HEK293 (cell line): ENCODE measurements at regions of chr16 and their contacts with region 1.

Region 1: GRCh38 chr16:30844671-30845449 is 49.0 kb downstream of the BCL7C start:
- H3K4me3 ChIP-seq: no peak overlapping the region
- H3K27ac ChIP-seq: no peak overlapping the region
- H3K4me1 ChIP-seq: no peaks in the 10 kb centered on the region
- CTCF ChIP-seq: peak; percentile 91

Region 2: GRCh38 chr16:30637942-30638341 is 206.9 kb before region 1 on chr16:
- CTCF ChIA-PET with region 1: no interaction called
- POLR2A ChIA-PET with region 1: no interaction called
- H3K4me3 ChIP-seq: no peak overlapping the region
- H3K27ac ChIP-seq: no peak overlapping the region
- H3K4me1 ChIP-seq: 0 out of 2 replicates have a peak, but pooled peaks cover 2% of the 10 kb centered on the region
- CTCF ChIP-seq: peak; percentile 75

Region 3: DNA sequence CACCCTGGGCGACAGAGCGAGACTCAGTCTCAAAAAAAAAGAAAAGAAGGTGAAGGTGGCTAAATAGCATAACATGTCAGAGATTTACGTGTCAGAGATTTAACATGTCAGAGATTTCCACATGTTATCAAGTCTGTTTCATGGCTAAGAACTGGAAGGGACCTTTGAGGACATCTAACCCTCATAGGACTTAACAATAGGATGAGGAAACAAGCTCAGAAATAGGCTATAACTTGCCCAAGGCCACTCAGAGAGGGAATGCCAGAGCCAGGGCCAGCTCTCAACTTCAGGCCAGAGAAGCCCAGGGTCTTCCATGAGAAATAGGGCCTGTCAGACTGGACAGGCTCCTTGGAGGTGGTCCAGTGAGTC is 31.1 kb before region 1 on chr16:
- CTCF ChIA-PET with region 1: interaction called, 11 read pairs
- POLR2A ChIA-PET with region 1: no interaction called
- H3K4me3 ChIP-seq: peak overlapping the region; percentile 29
- H3K27ac ChIP-seq: peak overlapping the region; percentile 32; the same call in 1 of the 2 replicates
- H3K4me1 ChIP-seq: 0 out of 2 replicates have a peak, but pooled peaks cover 2% of the 10 kb centered on the region
- CTCF ChIP-seq: no peak

Region 4: GRCh38 chr16:30867747-30868146 is 22.9 kb after region 1 on chr16:
- CTCF ChIA-PET with region 1: interaction called, 21 read pairs
- POLR2A ChIA-PET with region 1: interaction called, 3 read pairs
- H3K4me3 ChIP-seq: no peak overlapping the region
- H3K27ac ChIP-seq: no peak overlapping the region
- H3K4me1 ChIP-seq: no peaks in the 10 kb centered on the region
- CTCF ChIP-seq: no peak

Region 5: DNA sequence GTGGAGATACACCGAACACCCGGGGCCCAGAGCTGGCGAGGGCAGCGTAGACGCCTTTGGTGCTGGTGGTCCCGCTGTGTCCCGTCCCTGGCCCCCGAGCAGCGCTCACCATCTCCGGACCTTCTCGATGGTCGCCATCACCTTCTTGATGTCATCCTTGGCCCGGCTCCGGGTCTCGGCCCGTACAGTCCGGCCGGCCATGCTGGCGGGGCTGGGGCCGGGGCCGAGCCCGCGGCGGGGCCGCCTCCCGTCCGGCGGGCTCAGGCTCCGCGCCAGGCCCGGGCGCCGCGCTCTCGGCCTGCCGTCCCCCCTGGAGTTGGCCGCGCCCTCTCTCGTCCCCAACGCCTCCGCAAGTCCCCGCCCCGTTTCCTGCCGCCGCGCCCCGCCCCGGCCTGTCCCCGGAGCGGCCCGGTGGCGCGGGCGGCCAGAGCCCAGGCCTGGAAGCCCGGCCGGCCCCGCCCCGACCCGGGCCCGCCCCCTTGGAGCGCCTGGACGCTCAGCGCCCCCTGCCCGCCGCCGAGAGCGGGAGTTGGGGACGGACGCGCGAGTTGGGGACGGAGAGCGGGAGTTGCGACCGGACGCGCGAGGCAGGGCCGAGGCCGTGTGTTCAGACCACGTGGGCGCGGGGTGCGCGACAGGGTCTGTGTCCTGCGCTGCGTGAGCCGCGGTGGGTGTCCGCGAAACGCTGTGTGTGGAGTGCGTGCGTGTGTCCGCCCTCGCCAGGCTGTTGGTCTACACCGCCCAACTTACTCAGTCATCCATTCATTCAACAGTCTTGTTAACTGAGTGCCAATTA is 49.1 kb after region 1 on chr16 and contains the start of gene BCL7C:
- CTCF ChIA-PET with region 1: interaction called, 22 read pairs
- POLR2A ChIA-PET with region 1: no interaction called
- H3K4me3 ChIP-seq: peak within 1 kb of the TSS; percentile 84
- H3K27ac ChIP-seq: peak within 1 kb of the TSS; percentile 75
- H3K4me1 ChIP-seq: no peaks in the 10 kb centered on the region; the same call in 1 of the 2 replicates
- CTCF ChIP-seq: peak; percentile 93

Region 6: DNA sequence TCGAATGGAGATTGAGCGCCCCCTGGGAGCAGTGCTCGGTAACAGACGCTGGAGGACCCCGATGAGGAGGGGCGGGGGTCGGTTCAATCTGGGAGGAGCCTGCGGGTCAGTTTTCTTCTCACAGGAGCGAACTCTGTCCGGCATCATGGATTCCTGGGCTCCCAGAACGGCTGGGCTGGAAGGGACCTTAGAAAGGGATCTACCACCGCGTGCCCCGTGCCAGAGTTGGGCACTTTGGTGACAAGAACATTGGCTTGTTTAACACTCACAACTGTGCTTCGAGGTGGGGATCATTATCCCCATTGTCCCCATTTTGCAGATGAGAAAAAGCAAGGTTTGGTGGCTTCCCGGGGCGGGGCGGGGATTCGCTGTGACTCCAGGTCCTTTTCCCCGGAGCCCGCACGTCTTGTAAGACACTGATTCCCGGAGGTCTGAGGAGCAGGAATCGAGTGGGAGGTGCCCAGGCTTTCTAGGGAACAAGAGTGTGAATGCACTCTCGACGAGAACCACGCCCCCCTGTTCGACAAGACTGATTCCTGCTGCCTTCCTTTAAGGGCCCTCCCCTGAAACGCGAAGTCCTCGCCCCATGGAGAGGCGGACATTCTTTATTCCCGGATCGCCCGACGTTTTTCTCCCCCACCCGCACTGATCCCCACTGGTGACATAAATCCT is 77.0 kb after region 1 on chr16:
- CTCF ChIA-PET with region 1: interaction called, 31 read pairs
- POLR2A ChIA-PET with region 1: interaction called, 3 read pairs
- H3K4me3 ChIP-seq: peak overlapping the region; percentile 54
- H3K27ac ChIP-seq: peak overlapping the region; percentile 25; the same call in 1 of the 2 replicates
- H3K4me1 ChIP-seq: no peaks in the 10 kb centered on the region
- CTCF ChIP-seq: peak; percentile 90; the same call in 1 of the 2 replicates

Region 7: GRCh38 chr16:30941600-30942425 is 97.0 kb after region 1 on chr16:
- CTCF ChIA-PET with region 1: interaction called, 58 read pairs
- POLR2A ChIA-PET with region 1: no interaction called
- H3K4me3 ChIP-seq: no peak overlapping the region
- H3K27ac ChIP-seq: no peak overlapping the region
- H3K4me1 ChIP-seq: no peaks in the 10 kb centered on the region
- CTCF ChIP-seq: peak; percentile 85